OCI-LY7 (cell line): ENCODE measurements at regions of chr3 and their contacts with region 1.

Region 1: GRCh38 chr3:156978481-156978961 is 152.4 kb downstream of the LEKR1 start:
- DNase-seq: peak; percentile 85
- H3K4me3 ChIP-seq: peak overlapping the region; percentile 30
- H3K27ac ChIP-seq: peak overlapping the region; percentile 60
- H3K4me1 ChIP-seq: peaks cover 21% of the 10 kb centered on the region
- CTCF ChIP-seq: no peak

Region 2: DNA sequence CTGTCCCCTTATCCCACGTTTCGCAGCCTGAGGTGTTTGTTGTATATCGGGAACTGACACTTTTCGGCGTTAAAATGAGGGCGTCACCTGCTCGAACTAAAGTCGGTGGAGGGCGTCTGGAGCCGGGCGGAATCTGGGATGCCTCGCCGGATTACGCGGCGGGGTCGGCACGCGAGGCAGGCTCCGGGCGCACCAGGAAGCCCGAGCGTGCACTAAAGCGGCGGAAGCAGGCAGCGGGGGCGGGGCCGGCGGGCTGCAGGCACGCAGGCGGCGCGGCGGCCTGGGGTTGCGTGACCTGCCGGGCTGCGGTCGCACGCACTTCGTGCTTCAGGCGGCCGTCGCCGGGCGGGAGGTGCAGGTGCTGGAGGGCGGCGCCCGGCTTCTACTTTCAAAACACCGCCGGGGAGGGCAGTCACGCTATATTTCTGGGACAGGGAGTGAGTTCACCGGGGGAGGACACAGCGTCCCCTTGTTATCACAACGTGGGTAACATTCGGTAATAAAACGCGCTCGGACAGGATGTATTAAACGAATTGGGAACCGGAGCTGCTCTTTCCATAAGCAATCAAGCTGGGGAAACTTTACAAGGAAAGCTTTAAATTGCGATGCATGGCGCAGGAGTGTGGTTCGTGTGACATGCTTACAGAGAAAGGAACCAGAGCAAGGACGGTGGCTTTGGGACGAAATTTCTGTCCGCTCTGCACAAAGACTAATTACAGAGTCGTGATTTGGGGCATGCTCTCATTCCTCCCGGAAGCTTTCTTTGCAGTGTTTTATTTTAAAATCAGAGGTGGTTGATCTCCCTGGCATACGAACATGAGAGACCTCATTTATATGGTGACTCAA is 161.5 kb before region 1 on chr3:
- CTCF ChIA-PET with region 1: no interaction called
- POLR2A ChIA-PET with region 1: interaction called, 3 read pairs
- intact Hi-C with region 1: loop called (anchors 5 kb)
- DNase-seq: peak; percentile 72
- H3K4me3 ChIP-seq: peak overlapping the region; percentile 65
- H3K27ac ChIP-seq: no peak overlapping the region
- H3K4me1 ChIP-seq: peaks cover 6% of the 10 kb centered on the region
- CTCF ChIP-seq: no peak; the same call in 1 of the 2 replicates

Region 3: GRCh38 chr3:156910022-156910421 is 68.5 kb before region 1 on chr3:
- CTCF ChIA-PET with region 1: no interaction called
- POLR2A ChIA-PET with region 1: no interaction called
- intact Hi-C with region 1: no loop called
- DNase-seq: no peak
- H3K4me3 ChIP-seq: no peak overlapping the region
- H3K27ac ChIP-seq: no peak overlapping the region
- H3K4me1 ChIP-seq: no peaks in the 10 kb centered on the region
- CTCF ChIP-seq: no peak

Region 4: DNA sequence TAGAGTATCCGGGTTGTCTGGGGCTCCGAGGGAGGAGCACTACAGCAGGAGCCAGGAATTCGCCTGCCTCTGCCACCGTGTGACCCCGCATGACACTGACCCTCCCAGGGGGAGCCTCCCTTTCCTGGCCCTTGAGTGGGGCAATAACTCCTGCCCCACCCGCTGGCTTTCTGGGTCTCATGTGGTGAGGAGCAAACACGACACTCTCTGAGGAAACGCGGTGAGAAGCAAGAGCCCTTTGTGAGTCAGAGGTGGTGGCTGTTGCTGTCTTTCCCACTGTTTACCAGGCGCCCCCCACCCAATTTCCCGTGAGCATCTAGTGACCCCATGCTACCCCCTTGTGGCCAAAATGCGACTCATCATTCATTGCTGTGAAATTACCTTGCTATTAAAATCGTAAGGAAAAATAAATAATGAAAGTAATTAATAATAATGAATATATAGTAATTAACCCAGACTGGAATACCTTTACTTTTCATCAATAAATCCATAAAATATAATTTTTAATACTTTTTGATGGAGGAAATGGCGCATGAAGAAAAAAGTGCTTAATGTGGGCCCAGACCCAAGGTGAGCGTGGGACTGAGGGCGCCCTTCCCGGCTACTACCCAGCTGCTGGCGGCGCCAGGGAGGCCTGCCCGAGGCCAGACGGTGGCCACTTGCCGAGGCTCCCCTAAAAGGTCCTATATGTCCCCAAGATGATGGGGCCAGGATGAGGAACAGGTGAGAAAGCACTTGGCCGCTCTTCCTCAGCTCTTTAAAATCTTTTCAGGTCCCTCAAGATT is 152.1 kb after region 1 on chr3:
- CTCF ChIA-PET with region 1: no interaction called
- POLR2A ChIA-PET with region 1: no interaction called
- intact Hi-C with region 1: loop called (anchors 2 kb)
- DNase-seq: peak; percentile 46
- H3K4me3 ChIP-seq: no peak overlapping the region
- H3K27ac ChIP-seq: no peak overlapping the region
- H3K4me1 ChIP-seq: peaks cover 21% of the 10 kb centered on the region
- CTCF ChIP-seq: peak; percentile 87